CD4-positive, alpha-beta memory T cell (primary cell): ENCODE measurements at regions of chr1 and their contacts with region 1.

Region 1: GRCh38 chr1:27940297-27940696 is 5.5 kb downstream of the SMPDL3B start:
- DNase-seq: peak; percentile 71 to 73 (median 73)
- H3K4me3 ChIP-seq: no peak overlapping the region
- H3K4me3 Mint-ChIP-seq: no peak overlapping the region
- H3K27ac ChIP-seq: no peak overlapping the region
- H3K27ac Mint-ChIP-seq: peak overlapping the region; percentile 68 to 92 (median 87)
- H3K4me1 ChIP-seq: peaks cover 34% of the 10 kb centered on the region
- H3K4me1 Mint-ChIP-seq: peaks cover 22 to 55% (median 37%) of the 10 kb centered on the region in 4 donors
- H3K27me3 ChIP-seq: no peaks in the 10 kb centered on the region
- H3K27me3 Mint-ChIP-seq: peaks cover 2 to 3% of the 10 kb centered on the region in 2 donors

Region 2: DNA sequence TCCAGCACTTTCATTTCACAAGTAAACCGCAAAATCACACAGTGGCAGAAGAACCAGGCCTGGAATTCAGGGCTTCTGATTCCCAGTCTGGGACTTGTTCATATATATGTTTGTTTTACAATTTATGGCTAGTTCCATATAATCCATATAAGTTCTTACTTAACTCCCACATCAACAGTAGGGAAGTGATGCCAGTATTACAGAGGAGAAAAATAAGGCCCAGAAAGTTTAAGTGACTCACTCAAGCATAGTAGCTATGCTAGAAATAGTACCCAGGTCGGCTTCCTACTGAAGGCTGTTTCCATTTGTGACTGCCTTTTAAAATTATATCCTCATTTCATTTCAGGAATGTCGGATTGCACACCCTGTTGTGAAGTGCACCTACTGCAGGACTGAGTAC is 213.2 kb before region 1 on chr1:
- CTCF ChIA-PET with region 1: no interaction called
- POLR2A ChIA-PET with region 1: no interaction called
- intact Hi-C with region 1: no loop called
- DNase-seq: no peak
- H3K4me3 ChIP-seq: no peak overlapping the region
- H3K4me3 Mint-ChIP-seq: peak overlapping the region in 6 of 8 donors; percentile 81 to 87 (median 87)
- H3K27ac ChIP-seq: no peak overlapping the region
- H3K27ac Mint-ChIP-seq: peak overlapping the region in 6 of 7 donors; percentile 8 to 95 (median 64)
- H3K4me1 ChIP-seq: peaks cover 16% of the 10 kb centered on the region
- H3K4me1 Mint-ChIP-seq: peaks cover 14 to 38% (median 25%) of the 10 kb centered on the region in 4 donors
- H3K27me3 ChIP-seq: no peaks in the 10 kb centered on the region
- H3K27me3 Mint-ChIP-seq: no peaks in the 10 kb centered on the region

Region 3: GRCh38 chr1:27952147-27952546 is 11.8 kb after region 1 on chr1:
- CTCF ChIA-PET with region 1: interaction called, 30 read pairs
- POLR2A ChIA-PET with region 1: interaction called, 41 read pairs
- intact Hi-C with region 1: no loop called
- DNase-seq: no peak
- H3K4me3 ChIP-seq: no peak overlapping the region
- H3K4me3 Mint-ChIP-seq: no peak overlapping the region
- H3K27ac ChIP-seq: no peak overlapping the region
- H3K27ac Mint-ChIP-seq: no peak overlapping the region
- H3K4me1 ChIP-seq: no peaks in the 10 kb centered on the region
- H3K4me1 Mint-ChIP-seq: peaks cover under 1 to 6% (median 1%) of the 10 kb centered on the region in 4 donors
- H3K27me3 ChIP-seq: no peaks in the 10 kb centered on the region
- H3K27me3 Mint-ChIP-seq: no peaks in the 10 kb centered on the region

Region 4: GRCh38 chr1:27968694-27969093 is 28.4 kb after region 1 on chr1:
- CTCF ChIA-PET with region 1: interaction called, 12 read pairs
- POLR2A ChIA-PET with region 1: no interaction called
- intact Hi-C with region 1: no loop called
- DNase-seq: no peak
- H3K4me3 ChIP-seq: no peak overlapping the region
- H3K4me3 Mint-ChIP-seq: peak overlapping the region in 1 of 8 donors; percentile 20
- H3K27ac ChIP-seq: no peak overlapping the region
- H3K27ac Mint-ChIP-seq: peak overlapping the region; percentile 10 to 88 (median 67)
- H3K4me1 ChIP-seq: peaks cover 13% of the 10 kb centered on the region
- H3K4me1 Mint-ChIP-seq: peaks cover 13 to 41% (median 20%) of the 10 kb centered on the region in 4 donors
- H3K27me3 ChIP-seq: no peaks in the 10 kb centered on the region
- H3K27me3 Mint-ChIP-seq: no peaks in the 10 kb centered on the region

Region 5: DNA sequence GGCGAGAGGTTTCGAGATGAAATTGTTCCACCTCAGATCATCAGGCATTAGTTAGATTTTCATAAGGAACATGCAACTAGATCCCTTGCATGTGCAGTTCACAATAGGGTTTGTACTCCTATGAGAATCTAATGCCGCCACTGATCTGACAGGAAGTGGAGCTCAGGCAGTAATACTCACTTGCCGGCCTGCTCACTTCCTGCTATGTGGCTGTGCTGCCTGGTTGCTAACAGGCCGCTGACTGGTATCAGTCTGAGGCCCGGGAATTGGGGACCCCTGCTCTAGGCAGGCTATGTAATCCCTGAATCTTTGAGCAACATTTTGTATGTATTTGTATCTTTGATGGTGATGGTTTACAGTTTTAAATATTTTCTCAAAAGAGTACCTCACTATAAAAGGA is 52.0 kb after region 1 on chr1:
- CTCF ChIA-PET with region 1: interaction called, 16 read pairs
- POLR2A ChIA-PET with region 1: interaction called, 7 read pairs
- intact Hi-C with region 1: no loop called
- DNase-seq: peak; percentile 47 to 68 (median 56)
- H3K4me3 ChIP-seq: no peak overlapping the region
- H3K4me3 Mint-ChIP-seq: peak overlapping the region in 7 of 8 donors; percentile 17 to 86 (median 58)
- H3K27ac ChIP-seq: peak overlapping the region; percentile 65
- H3K27ac Mint-ChIP-seq: peak overlapping the region; percentile 64 to 99 (median 87)
- H3K4me1 ChIP-seq: peaks cover 31% of the 10 kb centered on the region
- H3K4me1 Mint-ChIP-seq: peaks cover 25 to 39% (median 31%) of the 10 kb centered on the region in 4 donors
- H3K27me3 ChIP-seq: no peaks in the 10 kb centered on the region
- H3K27me3 Mint-ChIP-seq: no peaks in the 10 kb centered on the region

Region 6: DNA sequence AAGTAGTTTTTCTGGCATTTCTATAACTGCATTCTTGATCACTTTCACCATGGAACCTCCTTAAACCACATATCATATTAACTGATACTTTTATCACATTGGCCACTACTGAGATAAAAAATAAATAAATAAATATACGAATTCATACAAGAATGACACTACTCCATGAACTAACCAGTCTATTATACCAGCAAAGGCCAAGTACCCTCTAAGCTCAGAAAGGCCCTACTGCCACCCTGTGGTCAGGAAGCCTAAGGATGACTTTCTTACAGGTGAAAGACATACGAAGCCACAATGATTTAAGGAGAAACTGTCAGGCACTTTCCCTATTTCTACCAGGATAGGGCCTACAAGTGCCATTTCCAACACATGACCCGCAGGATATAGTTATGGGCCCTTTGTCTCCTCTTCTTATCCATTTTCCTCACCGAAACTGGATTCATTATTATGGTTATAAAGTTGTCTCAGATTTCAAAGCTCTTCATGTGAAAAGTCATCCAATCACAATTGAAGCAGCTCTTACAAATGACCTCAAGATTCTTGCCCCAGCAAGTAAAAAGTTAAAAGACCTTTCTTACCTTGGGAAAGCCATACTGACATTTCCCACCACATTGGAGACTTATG is 268.6 kb after region 1 on chr1:
- CTCF ChIA-PET with region 1: interaction called, 11 read pairs
- POLR2A ChIA-PET with region 1: interaction called, 3 read pairs
- intact Hi-C with region 1: no loop called
- DNase-seq: peak; percentile 63 to 69 (median 65)
- H3K4me3 ChIP-seq: no peak overlapping the region
- H3K4me3 Mint-ChIP-seq: no peak overlapping the region
- H3K27ac ChIP-seq: no peak overlapping the region
- H3K27ac Mint-ChIP-seq: peak overlapping the region in 2 of 7 donors; percentile 20 to 44
- H3K4me1 ChIP-seq: no peaks in the 10 kb centered on the region
- H3K4me1 Mint-ChIP-seq: peaks cover 8 to 10% (median 9%) of the 10 kb centered on the region in 4 donors
- H3K27me3 ChIP-seq: no peaks in the 10 kb centered on the region
- H3K27me3 Mint-ChIP-seq: no peaks in the 10 kb centered on the region